ENCODE measurements at regions of chr2 and their contacts with region 1.

Region 1: DNA sequence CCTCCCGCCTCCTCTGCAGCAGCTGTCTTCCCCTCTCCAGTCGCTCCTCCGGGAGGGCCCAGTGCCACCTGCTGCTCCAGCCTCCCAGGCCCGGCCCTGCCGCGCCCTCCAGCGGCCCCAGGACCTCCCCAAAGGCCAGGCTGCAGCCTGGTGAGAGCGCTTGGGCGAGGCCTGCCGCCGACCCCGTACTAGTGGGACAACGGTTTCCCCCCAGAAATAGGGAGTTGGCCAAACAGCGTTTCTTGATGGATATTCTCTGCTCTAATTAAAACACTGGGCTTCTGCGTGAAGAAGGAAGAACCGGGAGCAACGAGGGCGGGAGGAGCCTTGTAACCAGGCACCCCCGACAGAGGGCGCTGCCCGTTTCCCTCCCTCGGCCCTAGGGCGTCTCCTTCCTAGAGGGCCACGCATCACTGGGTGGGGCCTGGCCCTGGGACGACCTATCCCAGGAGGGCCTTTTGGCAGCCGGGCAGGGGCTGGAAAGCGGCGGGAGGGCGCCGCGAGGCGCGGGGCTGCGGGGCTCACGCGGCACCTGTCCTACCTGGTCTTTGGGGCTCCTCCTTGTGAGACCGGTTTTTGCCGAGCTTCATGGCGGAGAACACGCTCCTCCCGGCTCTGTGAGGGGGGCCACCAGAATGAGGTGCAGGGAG is 25.4 kb upstream of the OTOF start:
- DNase-seq: peak; percentile 92
- ATAC-seq: peak; percentile 96
- H3K4me3 Mint-ChIP-seq: peak overlapping the region; percentile 72
- H3K27ac Mint-ChIP-seq: no peak overlapping the region
- H3K4me1 Mint-ChIP-seq: peaks cover 10% of the 10 kb centered on the region
- H3K27me3 Mint-ChIP-seq: peaks cover 16% of the 10 kb centered on the region
- CTCF ChIP-seq: peak; percentile 83

Region 2: DNA sequence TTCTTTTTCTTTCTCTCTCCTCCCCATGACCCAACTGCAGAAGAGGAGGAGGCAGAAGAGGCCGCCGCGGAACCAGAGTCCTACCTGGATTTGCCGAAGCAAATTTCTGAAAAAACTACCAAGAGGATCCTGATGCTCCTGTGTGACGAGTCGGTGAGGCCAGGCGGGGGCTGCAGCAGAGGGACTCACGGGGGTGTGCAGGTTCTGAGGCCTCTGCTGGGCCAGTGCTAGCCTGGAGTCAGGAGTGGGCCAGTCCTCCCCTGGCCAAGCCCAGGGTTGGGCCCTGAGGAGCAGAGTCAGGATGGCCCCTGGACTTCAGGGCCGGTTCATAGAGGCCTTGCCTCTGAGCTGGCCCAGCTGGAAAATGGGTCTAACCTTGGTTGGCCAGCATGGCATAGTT is 54.7 kb before region 1 on chr2:
- CTCF ChIA-PET with region 1: no interaction called
- POLR2A ChIA-PET with region 1: no interaction called
- DNase-seq: no peak
- ATAC-seq: no peak
- H3K4me3 Mint-ChIP-seq: no peak overlapping the region
- H3K27ac Mint-ChIP-seq: no peak overlapping the region
- H3K4me1 Mint-ChIP-seq: no peaks in the 10 kb centered on the region
- H3K27me3 Mint-ChIP-seq: no peaks in the 10 kb centered on the region
- CTCF ChIP-seq: no peak

Region 3: GRCh38 chr2:26462511-26463243 is 40.7 kb before region 1 on chr2:
- CTCF ChIA-PET with region 1: interaction called, 13 read pairs
- POLR2A ChIA-PET with region 1: no interaction called
- DNase-seq: peak; percentile 71
- ATAC-seq: peak; percentile 68
- H3K4me3 Mint-ChIP-seq: no peak overlapping the region
- H3K27ac Mint-ChIP-seq: 0 out of 2 replicates have a peak overlapping the region, but pooled peaks have one; percentile 23
- H3K4me1 Mint-ChIP-seq: peaks cover 12% of the 10 kb centered on the region
- H3K27me3 Mint-ChIP-seq: no peaks in the 10 kb centered on the region; the same call in 1 of the 2 replicates
- CTCF ChIP-seq: peak; percentile 48; the same call in 1 of the 2 replicates

Region 4: DNA sequence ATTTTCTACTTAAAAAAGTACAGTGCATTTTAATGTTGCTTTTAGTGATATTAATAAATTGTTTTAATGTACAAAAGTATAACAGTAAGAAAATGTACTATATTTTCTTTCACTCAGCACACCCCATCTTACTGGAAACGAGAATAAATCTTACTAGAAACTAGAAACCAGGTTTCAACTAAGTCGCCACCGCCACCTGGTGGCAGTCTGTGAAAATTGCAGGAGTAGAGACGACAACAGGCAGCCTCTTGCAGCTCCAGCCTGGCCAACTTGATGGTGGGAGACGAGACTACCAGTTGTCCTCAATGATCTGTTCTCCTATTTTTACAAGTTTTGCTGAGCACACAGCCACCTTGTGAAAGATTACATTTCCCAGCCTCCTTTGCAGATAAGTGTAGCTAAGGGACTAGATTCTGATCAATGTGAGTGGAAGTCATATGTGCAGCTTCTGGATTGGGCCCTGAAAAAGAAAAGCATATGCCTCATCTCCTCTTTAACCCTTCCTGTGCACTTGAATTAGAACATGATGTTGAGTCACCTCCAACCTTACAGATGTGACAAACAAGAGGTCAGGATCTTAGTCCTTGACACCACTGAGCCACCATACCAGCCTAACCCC is 34.2 kb before region 1 on chr2:
- CTCF ChIA-PET with region 1: interaction called, 43 read pairs
- POLR2A ChIA-PET with region 1: no interaction called
- DNase-seq: peak; percentile 88
- ATAC-seq: peak; percentile 49
- H3K4me3 Mint-ChIP-seq: no peak overlapping the region
- H3K27ac Mint-ChIP-seq: no peak overlapping the region
- H3K4me1 Mint-ChIP-seq: 0 out of 2 replicates have a peak, but pooled peaks cover 2% of the 10 kb centered on the region
- H3K27me3 Mint-ChIP-seq: no peaks in the 10 kb centered on the region
- CTCF ChIP-seq: peak; percentile 94

Region 5: DNA sequence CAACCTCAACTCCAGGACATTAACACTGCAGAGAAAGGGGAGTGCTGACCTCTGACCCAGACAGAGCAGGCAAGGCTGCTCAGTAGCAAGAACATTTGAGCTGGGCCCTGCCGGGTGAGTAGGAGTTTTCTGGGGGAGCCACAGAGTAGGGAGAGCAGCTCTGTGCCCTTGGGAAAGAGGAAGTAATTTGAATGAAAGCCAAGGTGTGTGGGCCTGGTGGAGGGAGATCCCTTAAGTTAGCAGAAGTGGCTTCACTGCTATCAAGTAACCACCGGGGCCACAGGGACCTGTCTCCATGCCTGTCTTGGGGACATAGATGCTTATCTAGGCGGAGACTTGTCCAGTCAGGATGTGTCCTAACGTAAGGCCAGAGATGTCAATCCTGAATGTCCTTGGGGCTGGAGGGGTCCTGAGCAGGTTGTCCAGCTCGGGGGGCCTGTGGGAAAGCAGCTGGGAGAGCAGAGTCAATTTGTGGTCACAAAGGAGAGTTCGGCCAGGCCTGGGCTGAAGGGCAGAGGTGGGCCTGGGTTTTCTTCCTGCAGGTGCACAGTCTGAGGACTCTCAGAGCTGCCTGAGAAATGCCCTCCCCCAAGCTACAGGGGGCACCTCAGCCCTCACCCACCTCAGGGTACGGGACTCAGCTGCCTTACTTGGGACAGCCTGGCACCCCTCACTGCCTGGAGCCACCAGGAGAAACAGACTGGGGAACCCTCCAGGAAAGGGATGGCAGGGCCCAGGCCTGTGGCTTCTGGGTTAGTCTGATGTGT is 10.4 kb before region 1 on chr2:
- CTCF ChIA-PET with region 1: interaction called, 18 read pairs
- POLR2A ChIA-PET with region 1: no interaction called
- DNase-seq: no peak
- ATAC-seq: no peak
- H3K4me3 Mint-ChIP-seq: no peak overlapping the region
- H3K27ac Mint-ChIP-seq: no peak overlapping the region
- H3K4me1 Mint-ChIP-seq: peaks cover 18% of the 10 kb centered on the region
- H3K27me3 Mint-ChIP-seq: no peaks in the 10 kb centered on the region; the same call in 1 of the 2 replicates
- CTCF ChIP-seq: no peak

Region 6: GRCh38 chr2:26521054-26521912 is 17.9 kb after region 1 on chr2:
- CTCF ChIA-PET with region 1: interaction called, 23 read pairs
- POLR2A ChIA-PET with region 1: no interaction called
- DNase-seq: peak; percentile 72
- ATAC-seq: peak; percentile 93
- H3K4me3 Mint-ChIP-seq: no peak overlapping the region
- H3K27ac Mint-ChIP-seq: no peak overlapping the region; the same call in 1 of the 2 replicates
- H3K4me1 Mint-ChIP-seq: no peaks in the 10 kb centered on the region
- H3K27me3 Mint-ChIP-seq: no peaks in the 10 kb centered on the region
- CTCF ChIP-seq: no peak

Region 7: DNA sequence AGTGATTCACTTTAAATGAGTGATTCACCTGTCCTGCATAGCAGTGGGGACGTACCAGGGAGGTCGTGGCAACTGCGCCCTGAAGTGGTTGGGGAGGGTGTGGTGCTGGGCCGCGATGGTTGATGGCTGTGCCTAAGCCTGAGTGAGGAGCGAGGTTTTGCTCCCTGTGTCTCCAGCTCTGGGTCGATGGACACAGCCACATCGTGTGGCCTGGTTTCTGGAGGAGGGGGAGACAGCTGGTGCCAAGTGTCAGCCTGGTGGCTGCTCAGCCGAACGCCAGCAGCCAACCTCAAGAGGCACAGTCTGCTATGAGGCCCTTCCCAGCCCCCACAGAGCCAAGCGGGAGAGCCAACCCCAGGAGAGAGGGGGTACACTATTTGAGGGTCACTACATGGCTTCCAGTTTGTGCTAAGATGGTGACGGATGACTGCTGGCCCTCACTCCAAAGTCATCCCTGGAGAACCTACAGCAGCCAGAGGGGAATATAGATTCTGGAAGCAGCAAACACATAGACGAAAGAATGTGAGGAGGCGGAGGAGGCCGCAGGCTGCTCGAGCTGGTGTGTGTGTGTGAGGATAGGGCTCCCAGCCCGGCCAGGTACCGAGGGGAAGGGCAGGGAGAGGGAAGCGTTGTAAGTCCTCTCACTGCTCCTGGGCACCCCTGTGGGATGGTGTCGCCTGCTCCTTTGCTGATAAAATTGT is 33.2 kb after region 1 on chr2:
- CTCF ChIA-PET with region 1: interaction called, 11 read pairs
- POLR2A ChIA-PET with region 1: no interaction called
- DNase-seq: no peak
- ATAC-seq: no peak
- H3K4me3 Mint-ChIP-seq: no peak overlapping the region
- H3K27ac Mint-ChIP-seq: no peak overlapping the region
- H3K4me1 Mint-ChIP-seq: peaks cover 16% of the 10 kb centered on the region
- H3K27me3 Mint-ChIP-seq: no peaks in the 10 kb centered on the region; the same call in 1 of the 2 replicates
- CTCF ChIP-seq: no peak

Region 8: GRCh38 chr2:26542194-26542455 is 38.8 kb after region 1 on chr2:
- CTCF ChIA-PET with region 1: interaction called, 11 read pairs
- POLR2A ChIA-PET with region 1: interaction called, 3 read pairs
- DNase-seq: no peak
- ATAC-seq: no peak
- H3K4me3 Mint-ChIP-seq: no peak overlapping the region
- H3K27ac Mint-ChIP-seq: no peak overlapping the region
- H3K4me1 Mint-ChIP-seq: peaks cover 28% of the 10 kb centered on the region
- H3K27me3 Mint-ChIP-seq: no peaks in the 10 kb centered on the region
- CTCF ChIP-seq: no peak

Measured in WTC11 (cell line).